OCI-LY7 (cell line): ENCODE measurements at regions of chr3 and their contacts with region 1.

Region 1: GRCh38 chr3:41418961-41419691 is 219.8 kb downstream of the CTNNB1 start:
- DNase-seq: no peak
- H3K4me3 ChIP-seq: no peak overlapping the region
- H3K27ac ChIP-seq: no peak overlapping the region
- H3K4me1 ChIP-seq: no peaks in the 10 kb centered on the region
- CTCF ChIP-seq: no peak

Region 2: DNA sequence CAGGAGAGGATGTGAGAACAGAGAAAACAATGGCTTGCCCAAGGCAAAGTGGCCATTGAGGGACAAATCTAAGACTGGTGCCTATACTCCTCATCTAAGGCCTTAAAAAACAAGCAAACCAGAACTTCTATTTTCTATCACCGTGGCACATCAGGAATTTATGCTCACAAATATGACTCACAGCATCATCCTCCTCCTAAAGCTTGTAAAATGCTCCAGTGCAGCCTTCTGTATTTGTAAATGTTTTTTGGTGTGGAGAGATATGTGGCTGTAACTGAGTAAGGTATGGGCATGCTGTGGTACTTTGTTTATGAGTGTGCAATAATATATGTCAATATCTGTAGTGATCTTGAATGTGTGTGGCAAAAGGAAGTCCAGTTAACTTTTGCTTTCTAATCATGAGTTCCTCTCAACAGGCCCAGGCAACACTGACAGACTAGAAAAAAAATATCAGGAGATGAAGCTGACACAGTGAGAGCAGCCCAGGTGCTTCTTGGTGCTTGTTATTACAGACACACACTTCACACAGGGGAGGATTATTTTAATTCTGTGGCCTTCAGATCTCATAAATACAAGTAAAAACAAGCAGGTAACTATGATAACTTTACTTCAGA is 159.6 kb before region 1 on chr3:
- CTCF ChIA-PET with region 1: no interaction called
- POLR2A ChIA-PET with region 1: no interaction called
- intact Hi-C with region 1: no loop called
- DNase-seq: no peak
- H3K4me3 ChIP-seq: no peak overlapping the region
- H3K27ac ChIP-seq: no peak overlapping the region
- H3K4me1 ChIP-seq: no peaks in the 10 kb centered on the region
- CTCF ChIP-seq: no peak

Region 3: GRCh38 chr3:41569632-41570305 is 150.6 kb after region 1 on chr3:
- CTCF ChIA-PET with region 1: no interaction called
- POLR2A ChIA-PET with region 1: no interaction called
- intact Hi-C with region 1: no loop called
- DNase-seq: no peak
- H3K4me3 ChIP-seq: no peak overlapping the region
- H3K27ac ChIP-seq: no peak overlapping the region
- H3K4me1 ChIP-seq: no peaks in the 10 kb centered on the region
- CTCF ChIP-seq: no peak

Region 4: GRCh38 chr3:41581700-41582099 is 162.6 kb after region 1 on chr3:
- CTCF ChIA-PET with region 1: no interaction called
- POLR2A ChIA-PET with region 1: no interaction called
- intact Hi-C with region 1: loop called (anchors 10 kb)
- DNase-seq: peak; percentile 34
- H3K4me3 ChIP-seq: no peak overlapping the region
- H3K27ac ChIP-seq: no peak overlapping the region
- H3K4me1 ChIP-seq: peaks cover 2% of the 10 kb centered on the region
- CTCF ChIP-seq: no peak